Colonic mucosa (tissue), 4 donors: ENCODE measurements at regions of chr7 and their contacts with region 1.

Region 1: DNA sequence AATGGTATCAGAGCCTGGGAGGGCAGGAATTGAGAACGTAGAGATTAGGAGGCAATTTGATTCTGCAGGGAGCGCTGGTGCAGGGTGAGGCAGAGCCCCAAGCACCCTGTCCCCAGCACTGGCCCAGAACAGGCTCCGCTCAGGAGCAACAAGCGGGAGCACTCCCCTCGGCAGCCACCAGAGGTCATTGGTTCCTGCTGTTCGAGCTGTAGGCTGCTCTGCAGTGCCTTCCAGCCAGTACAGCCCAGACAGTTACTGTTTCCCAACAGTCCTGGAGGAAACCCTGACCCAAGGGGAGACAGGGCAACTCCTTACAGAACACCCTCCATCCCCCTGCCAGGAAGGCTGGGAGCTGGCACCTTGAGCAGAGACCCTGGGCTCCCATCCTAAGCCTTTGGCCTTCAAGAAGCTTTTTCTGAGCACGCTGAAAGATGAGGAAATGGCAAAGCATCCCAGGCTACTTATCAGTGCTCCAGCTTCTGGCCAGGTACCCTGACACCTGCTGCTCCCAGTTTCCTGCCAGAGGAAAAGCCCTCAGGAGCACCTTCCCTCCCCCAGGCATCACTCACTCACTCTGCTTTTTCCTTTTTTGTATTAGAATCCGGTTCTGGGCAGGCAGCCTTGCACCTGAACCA is 71.2 kb upstream of the EFCAB10 start:
- DNase-seq: peak; percentile 82
- H3K4me3 ChIP-seq: no peak overlapping the region
- H3K27ac ChIP-seq: no peak overlapping the region
- H3K4me1 ChIP-seq: peaks cover 4% of the 10 kb centered on the region
- H3K27me3 ChIP-seq: no peaks in the 10 kb centered on the region
- CTCF ChIP-seq: peak; percentile 90

Region 2: GRCh38 chr7:105885387-105886111 is 233.1 kb after region 1 on chr7:
- intact Hi-C with region 1: no loop called
- DNase-seq: no peak
- H3K4me3 ChIP-seq: no peak overlapping the region
- H3K27ac ChIP-seq: no peak overlapping the region
- H3K4me1 ChIP-seq: no peaks in the 10 kb centered on the region
- H3K27me3 ChIP-seq: no peaks in the 10 kb centered on the region
- CTCF ChIP-seq: no peak

Region 3: GRCh38 chr7:105932835-105933477 is 280.5 kb after region 1 on chr7:
- intact Hi-C with region 1: no loop called
- DNase-seq: peak; percentile 32
- H3K4me3 ChIP-seq: no peak overlapping the region
- H3K27ac ChIP-seq: no peak overlapping the region
- H3K4me1 ChIP-seq: no peaks in the 10 kb centered on the region
- H3K27me3 ChIP-seq: no peaks in the 10 kb centered on the region
- CTCF ChIP-seq: no peak

Region 4: GRCh38 chr7:106009403-106010226 is 357.1 kb after region 1 on chr7:
- intact Hi-C with region 1: loop called (anchors 10 kb)
- DNase-seq: peak; percentile 90
- H3K4me3 ChIP-seq: no peak overlapping the region
- H3K27ac ChIP-seq: no peak overlapping the region
- H3K4me1 ChIP-seq: no peaks in the 10 kb centered on the region
- H3K27me3 ChIP-seq: no peaks in the 10 kb centered on the region
- CTCF ChIP-seq: peak; percentile 99

Region 5: DNA sequence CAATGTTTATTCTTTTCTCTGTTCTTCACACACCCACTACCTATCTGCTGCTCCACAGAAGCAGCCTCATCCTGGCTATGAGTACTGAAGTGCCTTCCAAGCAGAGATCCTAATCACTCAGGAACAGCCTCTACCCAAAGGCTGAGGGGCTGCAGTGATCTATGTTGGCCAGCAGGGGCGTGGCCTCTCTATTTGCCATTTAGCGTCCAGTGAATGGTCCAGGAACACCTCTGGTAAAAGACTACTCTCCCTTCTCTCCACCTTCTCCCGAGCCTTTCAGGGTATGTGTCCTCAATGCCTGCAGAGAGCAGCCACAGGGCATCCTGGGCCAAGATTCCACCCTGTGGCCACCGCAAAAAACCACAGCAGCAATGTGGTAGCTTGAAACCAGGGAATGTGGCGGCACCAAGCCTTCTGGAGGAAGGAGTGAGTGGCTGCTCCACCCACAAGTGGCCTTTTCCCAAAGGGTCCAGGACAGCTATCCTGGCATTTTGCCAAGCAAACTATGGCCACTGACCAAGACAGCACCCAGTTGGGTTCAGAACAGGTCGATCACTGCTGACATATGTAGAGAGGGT is 388.8 kb after region 1 on chr7:
- intact Hi-C with region 1: loop called (anchors 2 kb)
- DNase-seq: no peak
- H3K4me3 ChIP-seq: no peak overlapping the region
- H3K27ac ChIP-seq: no peak overlapping the region
- H3K4me1 ChIP-seq: no peaks in the 10 kb centered on the region
- H3K27me3 ChIP-seq: no peaks in the 10 kb centered on the region
- CTCF ChIP-seq: peak; percentile 82

Region 6: DNA sequence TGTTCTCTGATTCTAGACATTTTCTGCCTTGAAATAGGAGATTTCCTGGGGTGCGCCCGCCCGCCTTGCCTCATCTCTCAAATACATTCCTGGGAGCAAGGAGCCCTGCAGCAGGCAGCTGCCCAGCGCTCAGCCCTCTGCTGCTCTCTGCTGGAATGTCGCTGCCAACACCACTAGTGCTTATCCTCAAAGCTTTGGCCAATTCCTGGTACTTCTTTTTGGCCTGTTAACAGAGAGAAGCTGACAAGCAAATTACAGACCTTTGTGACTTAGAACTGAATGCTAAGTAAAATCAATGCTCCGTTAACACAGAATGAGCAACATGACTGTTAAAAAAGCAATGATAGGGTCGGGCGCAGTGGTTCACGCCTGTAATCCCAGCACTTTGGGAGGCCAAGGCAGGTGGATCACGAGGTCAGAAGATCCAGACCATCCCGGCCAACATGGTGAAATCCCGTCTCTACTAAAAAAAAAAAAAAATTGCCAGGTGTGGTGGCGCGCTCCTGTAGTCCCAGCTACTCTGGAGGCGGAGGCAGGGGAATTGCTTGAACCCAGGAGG is 501.5 kb after region 1 on chr7:
- intact Hi-C with region 1: loop called (anchors 10 kb)
- DNase-seq: peak; percentile 81
- H3K4me3 ChIP-seq: no peak overlapping the region
- H3K27ac ChIP-seq: no peak overlapping the region
- H3K4me1 ChIP-seq: no peaks in the 10 kb centered on the region
- H3K27me3 ChIP-seq: no peaks in the 10 kb centered on the region
- CTCF ChIP-seq: peak; percentile 88

Region 7: GRCh38 chr7:106583101-106583500 is 930.6 kb after region 1 on chr7:
- intact Hi-C with region 1: no loop called
- DNase-seq: no peak
- H3K4me3 ChIP-seq: no peak overlapping the region
- H3K27ac ChIP-seq: no peak overlapping the region
- H3K4me1 ChIP-seq: no peaks in the 10 kb centered on the region
- H3K27me3 ChIP-seq: no peaks in the 10 kb centered on the region
- CTCF ChIP-seq: no peak